ENCODE measurements at regions of chr9 and their contacts with region 1.

Region 1: GRCh38 chr9:92325269-92325990 is at the starts of genes CENPP and NOL8:
- DNase-seq: peak; percentile 80 to 85
- ATAC-seq: peak; percentile 98
- H3K4me3 ChIP-seq: peak within 1 kb of the TSS; percentile 77 to 95 (median 85)
- H3K27ac ChIP-seq: peak within 1 kb of the TSS; percentile 91 to 98 (median 97)
- H3K4me1 ChIP-seq: peaks cover 21 to 31% of the 10 kb centered on the region in 2 donors
- H3K27me3 ChIP-seq: no peaks in the 10 kb centered on the region
- CTCF ChIP-seq: peak in 1 of 5 experiments; percentile 24
- POLR2A ChIP-seq: peak in 1 of 2 donors; percentile 67
- total RNA-seq, gene CENPP: 1.8 to 11.5 (median 8.7) TPM
- total RNA-seq, gene NOL8: 11.5 to 20.2 (median 14.0) TPM

Region 2: DNA sequence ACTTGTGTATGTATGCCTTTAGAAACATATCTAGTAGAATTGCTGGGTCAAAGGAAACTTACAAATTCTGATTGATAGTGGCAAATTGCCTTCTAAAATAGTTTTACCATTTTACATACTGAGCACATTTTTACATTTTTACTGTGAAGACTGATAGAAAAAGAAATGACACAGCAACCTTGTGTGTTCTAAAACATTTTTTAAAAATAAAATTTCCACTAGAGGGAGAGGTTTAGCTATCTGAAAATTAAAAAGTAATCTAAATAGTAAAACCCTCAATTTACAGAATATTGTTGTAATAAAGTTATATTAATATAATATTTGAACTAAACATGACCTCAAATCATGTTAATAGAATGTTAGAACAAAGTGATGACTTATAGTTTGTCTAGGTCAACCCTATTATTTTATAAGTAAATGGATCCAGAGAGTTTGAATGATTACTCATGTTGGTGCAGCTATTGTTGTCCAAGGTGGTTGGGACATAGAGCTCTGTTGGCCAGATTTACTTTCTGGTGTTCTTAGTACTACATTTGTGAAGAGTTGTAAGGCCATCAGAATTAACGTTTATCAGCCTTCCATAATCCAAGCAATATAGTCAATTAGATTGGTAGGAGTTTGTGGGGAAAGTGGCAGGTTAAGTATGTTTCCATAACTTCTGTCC is 17.5 kb after region 1 on chr9:
- in situ Hi-C with region 1: no loop called
- intact Hi-C with region 1: no loop called
- DNase-seq: no peak
- ATAC-seq: no peak
- H3K4me3 ChIP-seq: no peak overlapping the region
- H3K27ac ChIP-seq: no peak overlapping the region
- H3K4me1 ChIP-seq: no peaks in the 10 kb centered on the region
- H3K27me3 ChIP-seq: no peaks in the 10 kb centered on the region
- CTCF ChIP-seq: peak in 2 of 5 experiments; percentile 16 to 19
- POLR2A ChIP-seq: no peak

Region 3: DNA sequence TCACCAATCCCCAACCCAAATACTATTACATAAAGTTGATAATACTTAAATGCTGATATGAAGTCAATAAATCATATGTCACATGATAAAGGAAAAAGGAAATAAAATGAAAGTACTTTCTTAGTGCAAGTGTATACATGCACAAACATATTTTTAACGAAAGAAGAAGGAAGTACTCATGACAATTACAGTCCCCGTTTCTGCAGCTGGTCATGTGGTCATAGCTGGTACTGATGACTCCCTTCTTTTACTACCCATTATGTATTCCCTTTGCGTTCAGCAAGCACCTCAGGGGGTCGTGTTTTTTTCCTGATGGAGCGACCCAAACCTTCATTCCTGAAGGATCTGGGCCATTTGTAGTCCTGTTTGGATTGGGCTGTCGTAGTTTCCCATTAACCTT is 27.6 kb after region 1 on chr9:
- in situ Hi-C with region 1: no loop called
- intact Hi-C with region 1: no loop called
- DNase-seq: no peak
- ATAC-seq: no peak
- H3K4me3 ChIP-seq: no peak overlapping the region
- H3K27ac ChIP-seq: no peak overlapping the region
- H3K4me1 ChIP-seq: peaks cover 0 to 3% of the 10 kb centered on the region in 2 donors
- H3K27me3 ChIP-seq: no peaks in the 10 kb centered on the region
- CTCF ChIP-seq: no peak
- POLR2A ChIP-seq: no peak

Region 4: GRCh38 chr9:92488681-92489550 is 163.5 kb after region 1 on chr9:
- in situ Hi-C with region 1: no loop called
- intact Hi-C with region 1: no loop called
- DNase-seq: no peak
- ATAC-seq: no peak
- H3K4me3 ChIP-seq: no peak overlapping the region
- H3K27ac ChIP-seq: no peak overlapping the region
- H3K4me1 ChIP-seq: peaks cover 3 to 5% of the 10 kb centered on the region in 2 donors
- H3K27me3 ChIP-seq: no peaks in the 10 kb centered on the region
- CTCF ChIP-seq: no peak
- POLR2A ChIP-seq: no peak

Region 5: DNA sequence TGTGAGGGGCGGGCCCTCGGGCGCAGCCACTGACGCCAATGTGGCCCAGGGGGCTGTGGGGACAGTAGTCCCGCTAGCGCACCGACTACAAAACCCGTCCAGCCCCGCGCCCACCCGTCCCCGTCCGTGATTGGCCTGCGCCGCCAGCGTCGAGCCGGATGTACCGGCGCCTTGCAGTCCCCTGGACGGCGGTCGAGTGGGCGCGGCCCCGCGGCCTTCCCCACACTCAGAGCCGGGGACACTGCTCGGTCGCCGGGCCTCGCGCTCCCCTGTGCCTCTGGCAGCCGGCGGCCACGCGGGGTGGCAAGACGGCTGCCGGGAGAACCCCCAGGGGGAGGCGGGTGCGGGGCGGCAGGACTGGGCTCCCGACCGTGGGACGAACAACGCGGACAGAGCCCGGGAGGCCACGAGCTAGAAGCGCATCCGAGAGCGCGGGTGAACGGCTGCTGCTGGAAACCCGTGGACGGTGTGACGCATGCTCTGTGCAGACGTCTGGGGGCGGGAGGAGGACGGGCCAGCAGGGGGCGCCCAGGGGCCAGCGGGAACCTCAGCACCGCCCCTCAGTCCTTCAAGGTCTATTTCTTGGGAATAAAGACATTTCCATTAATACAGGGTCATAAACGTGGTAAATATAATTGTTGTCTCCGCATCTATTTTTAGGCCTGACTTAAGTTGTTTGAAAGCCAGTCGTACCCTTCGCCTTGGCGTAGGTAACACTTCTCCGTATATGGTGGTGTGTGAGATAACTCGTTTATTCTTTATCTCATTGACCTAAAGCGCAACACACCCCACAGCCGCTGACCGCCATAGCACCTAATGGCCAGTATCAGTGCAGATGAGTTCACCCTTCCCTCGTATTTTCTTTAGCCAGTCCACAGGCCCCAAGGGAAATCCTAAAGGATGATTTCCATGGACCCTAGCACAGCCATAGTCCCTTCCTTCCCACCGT is 439.8 kb after region 1 on chr9:
- in situ Hi-C with region 1: loop called in 1 of 4 experiments (anchors 25 kb)
- intact Hi-C with region 1: no loop called
- DNase-seq: peak; percentile 99
- ATAC-seq: peak; percentile 84 to 86
- H3K4me3 ChIP-seq: peak overlapping the region; percentile 72 to 99 (median 94)
- H3K27ac ChIP-seq: peak overlapping the region; percentile 93 to 100 (median 98)
- H3K4me1 ChIP-seq: peaks cover 38 to 47% of the 10 kb centered on the region in 2 donors
- H3K27me3 ChIP-seq: no peaks in the 10 kb centered on the region
- CTCF ChIP-seq: peak; percentile 83 to 98 (median 96)
- POLR2A ChIP-seq: peak; percentile 80 to 82

Region 6: GRCh38 chr9:93111371-93112115 is 786.1 kb after region 1 on chr9:
- in situ Hi-C with region 1: no loop called
- intact Hi-C with region 1: no loop called
- DNase-seq: peak in 1 of 2 donors; percentile 8
- ATAC-seq: no peak
- H3K4me3 ChIP-seq: no peak overlapping the region
- H3K27ac ChIP-seq: no peak overlapping the region
- H3K4me1 ChIP-seq: peaks cover 7 to 10% of the 10 kb centered on the region in 2 donors
- H3K27me3 ChIP-seq: no peaks in the 10 kb centered on the region
- CTCF ChIP-seq: no peak
- POLR2A ChIP-seq: no peak

Measured in gastrocnemius medialis (tissue), 4 donors.